HAP-1 (cell line): ENCODE measurements at regions of chr9 and their contacts with region 1.

Region 1: GRCh38 chr9:124040935-124041816 is 29.6 kb downstream of the LHX2 start:
- DNase-seq: peak in 1 of 2 experiments; percentile 75
- H3K4me3 ChIP-seq: peak overlapping the region; percentile 27
- H3K4me1 ChIP-seq: peaks cover 3% of the 10 kb centered on the region; the same call in 1 of the 2 replicates
- H3K27me3 ChIP-seq: peaks cover 3% of the 10 kb centered on the region; the same call in 1 of the 2 replicates

Region 2: DNA sequence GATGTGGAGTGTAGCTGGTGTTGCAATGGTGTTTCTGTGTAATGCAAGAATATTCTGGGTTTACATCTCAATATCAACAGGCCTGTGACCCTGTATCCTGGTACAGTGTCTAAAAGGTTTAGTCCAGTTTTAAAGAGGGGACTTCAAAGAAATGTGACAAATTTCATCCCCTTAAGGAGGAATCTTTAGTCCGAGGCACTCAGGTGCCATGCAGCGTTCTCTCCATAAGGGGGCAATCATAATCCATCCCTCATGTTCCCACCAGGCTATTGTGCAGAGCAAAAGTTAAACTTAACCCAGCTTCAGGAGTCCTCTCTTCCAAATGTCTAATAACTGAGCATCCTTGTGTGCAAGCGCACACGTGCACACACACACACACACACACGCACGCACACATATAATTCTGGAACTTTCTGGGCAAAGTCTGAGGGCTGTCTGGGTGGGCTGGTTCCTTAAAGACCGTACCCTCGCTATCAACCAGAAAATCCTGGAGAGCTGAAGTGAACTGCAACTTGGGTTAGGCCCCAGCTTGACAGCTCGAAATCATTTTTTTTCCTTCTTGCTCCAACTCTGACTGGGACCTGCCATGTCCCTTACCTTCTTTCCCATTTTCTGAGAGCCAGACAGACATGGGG is 639.2 kb before region 1 on chr9:
- in situ Hi-C with region 1: loop called (anchors 10 kb)
- DNase-seq: peak; percentile 38 to 59
- H3K4me3 ChIP-seq: no peak overlapping the region
- H3K4me1 ChIP-seq: peaks cover 7% of the 10 kb centered on the region
- H3K27me3 ChIP-seq: no peaks in the 10 kb centered on the region

Region 3: DNA sequence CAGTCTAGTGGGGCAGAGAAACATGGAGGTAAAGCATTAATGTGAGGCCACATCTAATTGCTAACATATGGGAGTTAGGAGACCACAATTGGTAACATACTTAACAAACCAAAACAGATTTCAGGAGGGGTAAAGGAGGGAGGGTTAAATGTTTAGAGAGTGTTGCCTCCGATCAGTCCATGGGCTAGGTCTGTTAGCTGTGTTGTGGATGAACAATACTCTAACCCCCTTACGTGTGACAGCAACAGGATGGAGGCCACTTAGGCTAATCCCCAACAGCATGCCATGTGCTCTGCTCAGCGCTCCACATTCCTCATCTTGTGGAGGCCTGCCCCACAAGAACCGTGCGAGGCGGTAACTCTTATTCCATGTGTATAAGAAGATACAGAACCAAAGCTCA is 518.2 kb before region 1 on chr9:
- in situ Hi-C with region 1: no loop called
- DNase-seq: no peak
- H3K4me3 ChIP-seq: no peak overlapping the region
- H3K4me1 ChIP-seq: no peaks in the 10 kb centered on the region
- H3K27me3 ChIP-seq: no peaks in the 10 kb centered on the region

Region 4: GRCh38 chr9:123784518-123784917 is 256.7 kb before region 1 on chr9:
- in situ Hi-C with region 1: no loop called
- DNase-seq: no peak
- H3K4me3 ChIP-seq: no peak overlapping the region
- H3K4me1 ChIP-seq: no peaks in the 10 kb centered on the region
- H3K27me3 ChIP-seq: no peaks in the 10 kb centered on the region